ENCODE measurements at regions of chr1 and their contacts with region 1.

Region 1: DNA sequence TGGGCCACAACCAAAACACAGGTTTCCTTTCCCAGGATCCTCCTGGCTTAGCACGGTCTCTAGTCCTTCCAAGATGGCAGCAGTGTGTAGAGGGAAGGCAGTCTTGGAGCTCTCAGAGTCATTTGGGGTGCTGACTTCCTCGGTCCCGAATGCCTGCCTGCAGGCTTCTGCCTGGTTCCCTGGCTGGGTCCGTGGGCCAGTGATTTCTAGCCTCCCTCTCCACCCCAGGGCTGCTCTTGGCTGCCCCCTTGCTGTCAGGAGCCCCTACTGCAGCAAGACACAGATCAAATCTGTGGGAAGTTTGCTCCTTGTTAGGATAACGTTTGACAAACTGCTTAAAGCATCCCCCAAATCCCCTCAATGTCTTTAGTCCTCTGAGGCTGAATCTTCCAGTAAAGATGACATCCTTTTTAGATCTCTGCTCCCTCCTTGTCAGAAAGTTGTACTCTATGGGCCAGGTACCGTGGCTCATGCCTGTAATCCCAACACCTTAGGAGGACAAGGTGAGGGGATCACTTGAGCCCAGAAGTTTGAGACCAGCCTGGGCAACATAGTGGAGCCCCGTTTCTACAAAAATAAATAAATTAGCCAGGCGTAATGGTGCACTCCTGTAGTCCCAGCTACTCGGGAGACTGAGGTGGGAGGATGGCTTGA is 272.5 kb downstream of the RRAGC start:
- DNase-seq: peak; percentile 16 to 75 (median 46)
- ATAC-seq: peak; percentile 59
- H3K4me3 ChIP-seq: no peak overlapping the region
- H3K4me3 Mint-ChIP-seq: no peak overlapping the region
- H3K27ac ChIP-seq: no peak overlapping the region
- H3K27ac Mint-ChIP-seq: no peak overlapping the region
- H3K4me1 ChIP-seq: peaks cover 9% of the 10 kb centered on the region
- H3K4me1 Mint-ChIP-seq: peaks cover 14% of the 10 kb centered on the region
- H3K27me3 ChIP-seq: no peaks in the 10 kb centered on the region
- H3K27me3 Mint-ChIP-seq: peaks cover 20% of the 10 kb centered on the region
- CTCF ChIP-seq: peak; percentile 89

Region 2: DNA sequence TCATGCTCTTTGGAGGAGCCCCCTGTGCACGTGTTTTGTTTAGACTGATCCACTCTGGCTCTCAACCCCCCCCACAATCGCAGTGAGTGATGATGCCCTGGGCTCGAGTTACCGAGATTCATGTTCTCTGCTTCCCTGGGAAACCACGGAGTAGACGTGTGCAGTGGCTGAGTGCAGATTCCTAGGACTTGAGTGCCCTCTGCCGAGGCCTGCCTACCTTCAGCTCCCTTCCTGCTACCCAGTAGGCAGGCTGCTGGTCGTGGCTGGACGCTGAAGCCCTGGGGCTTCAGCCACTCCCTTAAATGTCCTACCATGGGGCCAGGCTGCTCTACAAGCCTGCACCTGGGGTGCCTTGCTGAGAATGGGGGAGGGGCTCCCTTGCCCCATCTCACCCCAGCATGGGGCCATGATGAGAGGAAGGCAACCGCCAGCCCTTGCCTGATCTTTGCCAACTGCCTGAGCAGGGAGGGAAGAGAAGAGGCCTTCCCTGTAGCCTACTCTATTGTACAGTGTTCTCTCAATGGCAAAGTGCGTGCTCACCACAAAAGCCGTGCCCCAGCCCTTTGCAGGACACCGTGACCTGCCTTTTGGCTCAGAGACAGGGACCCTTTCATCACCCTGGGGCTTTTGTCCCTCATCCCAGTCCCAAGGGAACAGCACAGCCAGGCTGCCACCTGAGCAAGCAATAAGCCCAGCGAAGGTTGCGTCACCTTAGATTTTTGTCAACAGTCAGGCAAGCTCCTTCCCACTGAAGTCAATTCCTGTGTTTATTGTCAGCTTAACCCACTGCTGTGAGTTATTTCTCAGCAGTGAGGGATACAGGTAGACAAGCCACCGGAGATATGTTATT is 1548.7 kb before region 1 on chr1:
- CTCF ChIA-PET with region 1: no interaction called
- POLR2A ChIA-PET with region 1: no interaction called
- intact Hi-C with region 1: no loop called
- DNase-seq: no peak
- ATAC-seq: no peak
- H3K4me3 ChIP-seq: no peak overlapping the region
- H3K4me3 Mint-ChIP-seq: no peak overlapping the region
- H3K27ac ChIP-seq: no peak overlapping the region
- H3K27ac Mint-ChIP-seq: no peak overlapping the region
- H3K4me1 ChIP-seq: no peaks in the 10 kb centered on the region
- H3K4me1 Mint-ChIP-seq: peaks cover 3% of the 10 kb centered on the region
- H3K27me3 ChIP-seq: peaks cover 0 to 4% of the 10 kb centered on the region in 2 experiments
- H3K27me3 Mint-ChIP-seq: peaks cover 62% of the 10 kb centered on the region
- CTCF ChIP-seq: no peak

Region 3: GRCh38 chr1:38026592-38027200 is 560.4 kb before region 1 on chr1:
- CTCF ChIA-PET with region 1: no interaction called
- POLR2A ChIA-PET with region 1: no interaction called
- intact Hi-C with region 1: loop called in 1 of 2 experiments (anchors 10 kb)
- DNase-seq: peak in 2 of 9 experiments; percentile 41 to 54
- ATAC-seq: no peak
- H3K4me3 ChIP-seq: no peak overlapping the region
- H3K4me3 Mint-ChIP-seq: no peak overlapping the region
- H3K27ac ChIP-seq: no peak overlapping the region
- H3K27ac Mint-ChIP-seq: no peak overlapping the region
- H3K4me1 ChIP-seq: peaks cover 18% of the 10 kb centered on the region
- H3K4me1 Mint-ChIP-seq: peaks cover 32% of the 10 kb centered on the region
- H3K27me3 ChIP-seq: no peaks in the 10 kb centered on the region
- H3K27me3 Mint-ChIP-seq: no peaks in the 10 kb centered on the region
- CTCF ChIP-seq: no peak

Region 4: DNA sequence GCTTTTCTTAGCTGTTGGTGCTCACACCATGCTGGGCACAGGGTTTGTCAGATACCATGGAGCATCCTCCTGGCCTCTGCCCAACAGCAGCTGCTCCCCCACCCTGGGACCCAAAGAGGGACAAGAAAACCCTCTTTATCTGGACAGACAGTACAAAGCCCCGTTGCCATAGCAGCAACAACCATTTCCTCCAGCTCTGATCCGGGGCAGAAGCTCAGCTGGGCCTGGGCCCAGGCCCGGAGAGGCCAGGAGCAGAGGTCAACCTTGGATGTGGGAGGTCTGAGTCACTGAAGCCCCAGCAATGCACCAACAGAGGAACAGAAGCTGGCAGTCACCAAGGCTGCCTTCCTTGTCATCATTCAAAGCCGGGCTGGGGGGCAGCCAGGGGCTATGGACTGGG is 312.1 kb before region 1 on chr1:
- CTCF ChIA-PET with region 1: no interaction called
- POLR2A ChIA-PET with region 1: no interaction called
- intact Hi-C with region 1: loop called in 1 of 2 experiments (anchors 5 kb)
- DNase-seq: no peak
- ATAC-seq: no peak
- H3K4me3 ChIP-seq: no peak overlapping the region
- H3K4me3 Mint-ChIP-seq: no peak overlapping the region
- H3K27ac ChIP-seq: no peak overlapping the region
- H3K27ac Mint-ChIP-seq: no peak overlapping the region
- H3K4me1 ChIP-seq: no peaks in the 10 kb centered on the region
- H3K4me1 Mint-ChIP-seq: no peaks in the 10 kb centered on the region
- H3K27me3 ChIP-seq: no peaks in the 10 kb centered on the region
- H3K27me3 Mint-ChIP-seq: peaks cover 27% of the 10 kb centered on the region
- CTCF ChIP-seq: no peak

Region 5: DNA sequence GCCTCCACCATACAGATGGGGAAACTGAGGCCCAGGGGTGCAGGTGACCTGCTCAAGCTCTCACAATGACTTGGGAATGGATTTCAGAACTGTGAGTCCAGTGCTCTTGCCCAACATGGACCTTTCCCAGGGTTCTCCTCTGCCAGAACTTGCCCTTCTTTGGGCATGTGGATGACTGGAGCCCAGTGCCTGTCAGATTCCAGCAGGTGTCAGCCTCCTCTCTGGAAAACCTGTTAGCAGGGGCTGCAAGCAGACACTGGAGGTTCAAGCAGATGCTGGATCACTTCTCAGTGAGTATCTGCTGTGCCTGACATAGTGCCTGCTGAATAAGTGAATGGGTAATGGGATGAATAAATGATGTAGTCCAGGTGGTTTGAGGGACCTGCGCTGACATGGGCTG is 226.3 kb before region 1 on chr1:
- CTCF ChIA-PET with region 1: no interaction called
- POLR2A ChIA-PET with region 1: no interaction called
- intact Hi-C with region 1: loop called in 1 of 2 experiments (anchors 10 kb)
- DNase-seq: peak in 2 of 9 experiments; percentile 5 to 7
- ATAC-seq: no peak
- H3K4me3 ChIP-seq: no peak overlapping the region
- H3K4me3 Mint-ChIP-seq: no peak overlapping the region
- H3K27ac ChIP-seq: no peak overlapping the region
- H3K27ac Mint-ChIP-seq: no peak overlapping the region
- H3K4me1 ChIP-seq: no peaks in the 10 kb centered on the region
- H3K4me1 Mint-ChIP-seq: no peaks in the 10 kb centered on the region
- H3K27me3 ChIP-seq: no peaks in the 10 kb centered on the region
- H3K27me3 Mint-ChIP-seq: peaks cover 16% of the 10 kb centered on the region
- CTCF ChIP-seq: no peak

Region 6: DNA sequence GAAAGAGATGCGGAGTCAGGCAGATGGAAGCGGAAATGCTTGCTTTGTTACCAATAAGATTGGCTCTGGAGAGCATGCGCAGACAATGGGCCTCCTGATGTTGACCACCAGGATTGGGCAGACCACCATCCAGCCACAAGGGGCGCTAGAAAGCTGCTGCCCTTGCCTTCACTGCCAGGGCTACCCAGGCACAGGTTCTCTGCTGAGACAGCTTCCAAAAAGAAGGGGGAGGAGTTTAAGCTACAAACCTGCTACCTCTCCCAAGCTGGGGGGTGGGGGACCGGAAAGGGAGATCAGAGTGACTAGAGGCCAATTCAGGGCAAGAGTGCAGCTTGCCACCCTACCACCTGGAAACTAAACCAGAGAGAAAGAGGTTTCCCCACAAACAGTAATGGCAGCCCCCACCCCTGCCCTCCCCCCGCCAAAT is 97.3 kb before region 1 on chr1:
- CTCF ChIA-PET with region 1: interaction called, 6 read pairs
- POLR2A ChIA-PET with region 1: no interaction called
- intact Hi-C with region 1: loop called (anchors 1 kb)
- DNase-seq: peak in 7 of 9 experiments; percentile 11 to 62 (median 47)
- ATAC-seq: no peak
- H3K4me3 ChIP-seq: no peak overlapping the region
- H3K4me3 Mint-ChIP-seq: no peak overlapping the region
- H3K27ac ChIP-seq: no peak overlapping the region
- H3K27ac Mint-ChIP-seq: no peak overlapping the region
- H3K4me1 ChIP-seq: no peaks in the 10 kb centered on the region
- H3K4me1 Mint-ChIP-seq: no peaks in the 10 kb centered on the region
- H3K27me3 ChIP-seq: no peaks in the 10 kb centered on the region
- H3K27me3 Mint-ChIP-seq: peaks cover 22% of the 10 kb centered on the region
- CTCF ChIP-seq: peak; percentile 53

Region 7: GRCh38 chr1:38527373-38527966 is 59.6 kb before region 1 on chr1:
- CTCF ChIA-PET with region 1: no interaction called
- POLR2A ChIA-PET with region 1: no interaction called
- intact Hi-C with region 1: loop called in 1 of 2 experiments (anchors 10 kb)
- DNase-seq: peak in 5 of 9 experiments; percentile 29 to 66 (median 53)
- ATAC-seq: peak; percentile 61
- H3K4me3 ChIP-seq: no peak overlapping the region
- H3K4me3 Mint-ChIP-seq: peak overlapping the region; percentile 58
- H3K27ac ChIP-seq: no peak overlapping the region
- H3K27ac Mint-ChIP-seq: peak overlapping the region; percentile 50
- H3K4me1 ChIP-seq: no peaks in the 10 kb centered on the region
- H3K4me1 Mint-ChIP-seq: peaks cover 13% of the 10 kb centered on the region
- H3K27me3 ChIP-seq: no peaks in the 10 kb centered on the region
- H3K27me3 Mint-ChIP-seq: peaks cover 18% of the 10 kb centered on the region
- CTCF ChIP-seq: no peak

Region 8: GRCh38 chr1:39170731-39171667 is 583.9 kb after region 1 on chr1:
- CTCF ChIA-PET with region 1: no interaction called
- POLR2A ChIA-PET with region 1: no interaction called
- intact Hi-C with region 1: no loop called
- DNase-seq: no peak
- ATAC-seq: no peak
- H3K4me3 ChIP-seq: no peak overlapping the region
- H3K4me3 Mint-ChIP-seq: no peak overlapping the region
- H3K27ac ChIP-seq: no peak overlapping the region
- H3K27ac Mint-ChIP-seq: no peak overlapping the region
- H3K4me1 ChIP-seq: no peaks in the 10 kb centered on the region
- H3K4me1 Mint-ChIP-seq: no peaks in the 10 kb centered on the region
- H3K27me3 ChIP-seq: no peaks in the 10 kb centered on the region
- H3K27me3 Mint-ChIP-seq: no peaks in the 10 kb centered on the region
- CTCF ChIP-seq: no peak

Measured in CD8-positive, alpha-beta T cell (primary cell).